Head of caudate nucleus (tissue), 42 donors: ENCODE measurements at regions of chr11 and their contacts with region 1.

Region 1: DNA sequence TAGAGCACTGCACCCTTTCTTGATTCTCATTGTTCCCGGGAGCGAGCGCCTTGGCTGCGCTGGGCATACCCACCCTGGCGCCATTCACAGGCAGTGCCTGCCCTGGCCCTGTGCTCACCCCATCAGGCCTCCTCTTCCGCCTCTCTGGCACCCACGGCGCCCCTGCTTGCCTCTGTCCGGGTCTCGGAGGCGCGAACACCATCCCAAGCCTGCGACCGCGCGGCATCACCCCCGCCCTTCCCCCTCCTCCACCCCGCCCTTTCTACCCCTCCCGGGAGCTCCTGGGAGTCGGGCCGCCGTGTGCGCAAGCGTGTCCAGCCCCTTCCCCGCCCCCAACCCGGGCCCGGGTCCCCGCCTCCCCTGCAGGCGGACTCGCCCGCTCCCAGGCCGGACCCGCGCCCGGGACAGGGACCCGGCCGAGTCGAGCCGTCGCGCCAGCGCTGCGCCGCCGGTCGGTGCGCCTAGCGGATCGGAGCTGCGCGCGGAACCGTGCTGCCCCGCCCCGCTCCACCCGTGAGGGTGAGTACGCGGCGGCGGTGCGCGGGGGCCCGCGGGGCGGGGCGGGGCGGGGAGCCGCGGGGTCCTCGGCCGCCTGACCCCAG is at the start of gene ST3GAL4:
- DNase-seq: peak; percentile 42 to 94 (median 84)

Region 2: GRCh38 chr11:126186708-126187529 is 168.5 kb before region 1 on chr11:
- intact Hi-C with region 1: no loop called
- DNase-seq: peak in 1 of 42 donors; percentile 9

Region 3: GRCh38 chr11:126310228-126310991 is 45.0 kb before region 1 on chr11:
- intact Hi-C with region 1: loop called (anchors 5 kb)
- DNase-seq: peak in 41 of 42 donors; percentile 72 to 94 (median 84)

Region 4: GRCh38 chr11:126416542-126417090 is 61.2 kb after region 1 on chr11:
- intact Hi-C with region 1: loop called (anchors 10 kb)
- DNase-seq: peak; percentile 81 to 95 (median 91)